ENCODE measurements at regions of chr3 and their contacts with region 1.

Region 1: DNA sequence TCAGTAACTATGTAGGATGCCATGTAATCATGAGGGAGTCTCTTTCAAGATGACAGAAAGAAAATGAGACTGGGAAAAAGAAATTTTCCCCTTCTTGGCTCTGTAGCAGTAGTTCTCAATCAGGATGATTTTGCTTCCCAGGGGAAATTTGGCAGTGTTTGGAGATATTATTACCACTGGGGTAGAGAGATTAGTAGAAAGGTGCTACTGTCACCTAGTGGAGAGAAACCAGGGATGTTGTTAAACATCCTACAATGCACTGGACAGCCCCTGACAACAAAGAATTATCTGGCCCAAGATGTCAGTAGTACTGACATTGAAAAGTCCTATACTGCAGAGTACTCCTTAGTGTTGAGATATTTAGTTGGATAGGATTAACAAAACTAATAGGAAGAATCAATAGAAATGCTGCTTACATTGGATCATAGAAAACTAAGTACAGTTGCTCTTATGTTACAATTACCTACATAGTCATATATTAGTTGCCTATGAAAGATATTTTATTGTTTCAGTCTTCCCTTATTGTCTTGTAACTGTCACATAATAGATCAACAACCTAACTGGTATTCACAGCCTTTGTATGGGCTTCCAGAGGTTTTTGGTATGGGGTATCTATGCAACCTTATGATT is 433.3 kb downstream of the RAP2B start:
- DNase-seq: peak in 2 of 4 experiments; percentile 23 to 37
- ATAC-seq: peak; percentile 83
- H3K4me3 ChIP-seq: no peak overlapping the region
- H3K27ac ChIP-seq: no peak overlapping the region
- H3K4me1 ChIP-seq: no peaks in the 10 kb centered on the region
- H3K27me3 ChIP-seq: no peaks in the 10 kb centered on the region
- CTCF ChIP-seq: peak; percentile 52 to 71 (median 64)
- EP300 ChIP-seq: no peak
- POLR2A ChIP-seq: no peak
- RAD21 ChIP-seq: peak; percentile 80 to 86

Region 2: GRCh38 chr3:152524198-152525140 is 1070.8 kb before region 1 on chr3:
- CTCF ChIA-PET with region 1: no interaction called
- POLR2A ChIA-PET with region 1: no interaction called
- in situ Hi-C with region 1: loop called (anchors 25 kb)
- intact Hi-C with region 1: no loop called
- DNase-seq: peak in 2 of 4 experiments; percentile 14 to 76
- ATAC-seq: peak; percentile 53; the same call in 2 of the 3 replicates
- H3K4me3 ChIP-seq: no peak overlapping the region
- H3K27ac ChIP-seq: no peak overlapping the region
- H3K4me1 ChIP-seq: no peaks in the 10 kb centered on the region
- H3K27me3 ChIP-seq: no peaks in the 10 kb centered on the region
- CTCF ChIP-seq: peak; percentile 51 to 70 (median 59); a peak in 5 of 6 replicates
- EP300 ChIP-seq: no peak
- POLR2A ChIP-seq: no peak
- RAD21 ChIP-seq: peak; percentile 76 to 86

Region 3: GRCh38 chr3:153043729-153044328 is 551.5 kb before region 1 on chr3:
- CTCF ChIA-PET with region 1: interaction called, 3 read pairs
- POLR2A ChIA-PET with region 1: no interaction called
- in situ Hi-C with region 1: loop called (anchors 10 kb)
- intact Hi-C with region 1: loop called (anchors 2 kb)
- DNase-seq: no peak
- ATAC-seq: no peak
- H3K4me3 ChIP-seq: no peak overlapping the region
- H3K27ac ChIP-seq: peak overlapping the region; percentile 4; the same call in 1 of the 3 replicates
- H3K4me1 ChIP-seq: peaks cover 4 to 5% of the 10 kb centered on the region in 2 experiments; a peak in 3 of 5 replicates
- H3K27me3 ChIP-seq: no peaks in the 10 kb centered on the region
- CTCF ChIP-seq: no peak
- EP300 ChIP-seq: no peak
- POLR2A ChIP-seq: no peak
- RAD21 ChIP-seq: no peak

Region 4: GRCh38 chr3:153291056-153291685 is 304.1 kb before region 1 on chr3:
- CTCF ChIA-PET with region 1: no interaction called
- POLR2A ChIA-PET with region 1: no interaction called
- in situ Hi-C with region 1: no loop called
- intact Hi-C with region 1: loop called (anchors 5 kb)
- DNase-seq: peak; percentile 17 to 67 (median 31)
- ATAC-seq: peak; percentile 84
- H3K4me3 ChIP-seq: no peak overlapping the region
- H3K27ac ChIP-seq: no peak overlapping the region
- H3K4me1 ChIP-seq: peaks cover 0 to 21% of the 10 kb centered on the region in 2 experiments; a peak in 2 of 5 replicates
- H3K27me3 ChIP-seq: no peaks in the 10 kb centered on the region
- CTCF ChIP-seq: peak; percentile 56 to 66 (median 56)
- EP300 ChIP-seq: no peak
- POLR2A ChIP-seq: no peak
- RAD21 ChIP-seq: peak; percentile 36 to 67; a peak in 3 of 4 replicates

Region 5: DNA sequence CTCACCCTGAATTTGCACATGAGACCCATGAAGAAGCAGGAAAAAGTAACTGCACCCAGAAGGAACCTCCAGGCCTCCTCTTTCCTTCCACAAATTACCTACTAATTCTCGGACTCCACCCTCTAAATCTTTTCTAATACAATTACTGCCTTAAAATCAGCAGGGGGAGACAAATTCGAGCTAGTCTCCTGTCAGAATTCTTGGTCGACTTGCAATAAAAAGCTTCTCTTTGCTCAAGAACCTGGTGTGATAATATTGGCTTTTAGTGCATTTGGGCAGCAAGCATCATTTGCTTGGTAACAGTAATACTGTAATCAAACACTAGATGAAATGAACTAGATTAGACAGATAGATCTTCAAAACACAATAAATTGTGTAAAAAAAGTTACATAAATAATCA is 151.3 kb before region 1 on chr3:
- CTCF ChIA-PET with region 1: no interaction called
- POLR2A ChIA-PET with region 1: no interaction called
- in situ Hi-C with region 1: no loop called
- intact Hi-C with region 1: loop called (anchors 10 kb)
- DNase-seq: peak in 1 of 4 experiments; percentile 21
- ATAC-seq: no peak
- H3K4me3 ChIP-seq: no peak overlapping the region
- H3K27ac ChIP-seq: no peak overlapping the region
- H3K4me1 ChIP-seq: no peaks in the 10 kb centered on the region; a peak in 1 of 5 replicates
- H3K27me3 ChIP-seq: no peaks in the 10 kb centered on the region
- CTCF ChIP-seq: peak in 2 of 3 experiments; percentile 20 to 46; a peak in 3 of 6 replicates
- EP300 ChIP-seq: no peak
- POLR2A ChIP-seq: no peak
- RAD21 ChIP-seq: peak in 1 of 2 experiments; percentile 57; a peak in 2 of 4 replicates

Region 6: DNA sequence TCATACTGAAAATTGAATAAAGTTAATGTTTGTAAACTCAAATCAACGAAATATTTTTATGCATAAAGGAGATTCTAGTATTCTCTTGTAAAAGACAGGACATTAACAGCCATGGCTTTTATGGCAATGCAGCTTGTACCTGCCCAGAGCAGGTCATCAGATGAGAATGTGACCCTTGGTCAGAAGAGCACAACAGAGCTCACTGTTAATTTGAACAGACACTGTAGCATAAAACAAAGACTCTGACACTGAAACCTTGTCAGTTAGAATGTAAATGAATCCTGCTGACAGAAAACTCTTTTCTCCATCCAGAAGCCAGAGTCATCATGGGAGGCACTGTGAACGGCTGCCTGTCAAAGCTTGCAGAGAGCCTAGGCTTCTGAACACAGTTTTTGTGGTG is 22.6 kb before region 1 on chr3:
- CTCF ChIA-PET with region 1: no interaction called
- POLR2A ChIA-PET with region 1: no interaction called
- in situ Hi-C with region 1: no loop called
- intact Hi-C with region 1: no loop called
- DNase-seq: no peak
- ATAC-seq: no peak
- H3K4me3 ChIP-seq: no peak overlapping the region
- H3K27ac ChIP-seq: no peak overlapping the region
- H3K4me1 ChIP-seq: no peaks in the 10 kb centered on the region
- H3K27me3 ChIP-seq: no peaks in the 10 kb centered on the region
- CTCF ChIP-seq: no peak
- EP300 ChIP-seq: no peak
- POLR2A ChIP-seq: no peak
- RAD21 ChIP-seq: no peak

Region 7: DNA sequence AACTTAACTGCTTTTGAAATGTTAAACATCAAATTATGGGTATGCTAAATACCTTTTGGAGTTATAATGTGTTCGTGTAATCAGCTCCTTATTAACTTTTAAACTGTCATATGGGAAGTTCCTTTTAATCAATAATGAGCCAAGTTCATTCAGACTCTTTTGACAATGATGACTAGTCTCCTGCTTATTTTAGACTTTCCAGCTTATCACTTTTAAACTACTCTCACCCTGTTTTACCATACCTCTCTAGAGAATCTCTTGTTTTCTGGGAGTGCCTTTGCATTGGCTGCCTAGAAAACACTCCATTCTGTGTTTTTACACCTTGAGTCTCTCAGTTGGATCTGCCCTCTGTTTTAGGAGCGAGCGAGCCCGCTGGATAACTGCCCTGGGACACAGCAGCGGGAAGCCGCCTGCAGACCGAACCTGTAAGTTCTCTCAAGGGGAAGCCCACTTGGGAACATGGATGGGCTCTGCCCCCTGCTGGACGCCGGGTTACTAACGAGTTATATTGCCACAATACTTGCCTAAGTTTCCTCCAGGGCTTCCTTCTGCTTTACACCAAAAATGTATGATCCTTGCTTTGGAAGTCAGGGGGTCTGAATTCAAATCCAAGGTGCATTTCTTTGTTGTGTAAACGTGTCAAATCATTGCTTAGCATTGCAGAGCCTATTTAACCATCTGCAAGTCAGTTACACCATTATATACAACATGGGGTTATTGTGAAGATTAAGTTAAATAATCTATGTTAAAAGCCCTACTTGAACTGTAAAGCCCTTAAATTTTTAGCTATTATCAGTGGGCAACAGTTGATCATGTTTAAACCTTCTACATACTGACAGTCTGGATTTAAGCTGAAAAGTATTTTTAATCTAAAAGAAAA is 657.7 kb after region 1 on chr3:
- CTCF ChIA-PET with region 1: no interaction called
- POLR2A ChIA-PET with region 1: no interaction called
- in situ Hi-C with region 1: no loop called
- intact Hi-C with region 1: loop called (anchors 5 kb)
- DNase-seq: peak; percentile 76 to 90 (median 80)
- ATAC-seq: peak; percentile 99
- H3K4me3 ChIP-seq: no peak overlapping the region
- H3K27ac ChIP-seq: no peak overlapping the region
- H3K4me1 ChIP-seq: no peaks in the 10 kb centered on the region
- H3K27me3 ChIP-seq: no peaks in the 10 kb centered on the region
- CTCF ChIP-seq: peak; percentile 91 to 97 (median 97)
- EP300 ChIP-seq: no peak
- POLR2A ChIP-seq: no peak
- RAD21 ChIP-seq: peak; percentile 76 to 86

Measured in K562 (cell line).